Activated CD4-positive, alpha-beta memory T cell treated with anti-CD3 and anti-CD28 coated beads for 36 hours (primary cell): ENCODE measurements at regions of chr12 and their contacts with region 1.

Region 1: DNA sequence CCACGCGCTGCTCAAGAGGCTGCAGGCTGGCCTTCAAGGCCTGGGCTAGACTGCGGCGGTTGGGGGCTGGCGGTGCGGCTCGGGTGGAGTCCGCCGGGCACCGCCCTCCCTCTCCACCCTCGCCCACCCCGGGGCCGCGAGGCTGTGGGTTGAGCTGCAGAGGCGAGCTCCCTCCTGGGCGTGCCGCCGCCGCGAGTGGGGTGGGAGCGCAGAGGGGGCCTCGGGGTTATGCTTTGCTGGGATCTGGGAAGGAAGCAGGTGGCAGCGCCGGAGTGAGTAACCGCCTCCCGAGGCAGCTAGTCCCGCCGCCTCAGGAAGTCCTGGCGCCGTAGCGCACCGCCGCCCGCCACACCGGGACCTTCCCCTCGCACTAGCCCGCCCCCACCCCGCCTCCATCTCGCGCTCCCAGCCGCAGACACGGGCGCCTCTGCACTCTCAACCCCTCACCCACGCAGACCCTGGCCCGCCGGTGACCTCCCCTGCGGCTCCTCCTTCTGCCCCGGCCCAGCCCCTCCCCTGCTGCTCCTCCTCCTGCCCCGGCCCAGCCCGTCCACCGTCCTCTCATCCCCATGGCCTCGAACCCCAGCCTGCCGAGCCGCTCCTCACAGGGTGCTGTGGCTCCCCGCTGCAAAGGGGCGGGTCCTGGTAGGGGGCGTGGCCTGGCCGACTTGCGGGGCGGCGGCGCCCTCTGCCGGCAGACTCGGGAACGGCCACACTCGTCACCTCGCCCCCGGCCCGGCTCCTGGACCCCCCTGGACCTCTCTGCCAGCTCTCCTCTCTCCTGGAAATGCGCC is 16.6 kb downstream of the TAMALIN start:
- DNase-seq: peak; percentile 95
- H3K4me3 Mint-ChIP-seq: peak overlapping the region; percentile 79
- H3K27ac Mint-ChIP-seq: peak overlapping the region; percentile 91
- H3K4me1 Mint-ChIP-seq: peaks cover 32% of the 10 kb centered on the region
- H3K27me3 Mint-ChIP-seq: no peaks in the 10 kb centered on the region

Region 2: GRCh38 chr12:51923501-51924271 is 99.7 kb before region 1 on chr12:
- CTCF ChIA-PET with region 1: interaction called, 12 read pairs
- POLR2A ChIA-PET with region 1: interaction called, 3 read pairs
- intact Hi-C with region 1: loop called (anchors 2 kb)
- DNase-seq: peak; percentile 69
- H3K4me3 Mint-ChIP-seq: no peak overlapping the region
- H3K27ac Mint-ChIP-seq: no peak overlapping the region
- H3K4me1 Mint-ChIP-seq: peaks cover 12% of the 10 kb centered on the region
- H3K27me3 Mint-ChIP-seq: no peaks in the 10 kb centered on the region

Region 3: DNA sequence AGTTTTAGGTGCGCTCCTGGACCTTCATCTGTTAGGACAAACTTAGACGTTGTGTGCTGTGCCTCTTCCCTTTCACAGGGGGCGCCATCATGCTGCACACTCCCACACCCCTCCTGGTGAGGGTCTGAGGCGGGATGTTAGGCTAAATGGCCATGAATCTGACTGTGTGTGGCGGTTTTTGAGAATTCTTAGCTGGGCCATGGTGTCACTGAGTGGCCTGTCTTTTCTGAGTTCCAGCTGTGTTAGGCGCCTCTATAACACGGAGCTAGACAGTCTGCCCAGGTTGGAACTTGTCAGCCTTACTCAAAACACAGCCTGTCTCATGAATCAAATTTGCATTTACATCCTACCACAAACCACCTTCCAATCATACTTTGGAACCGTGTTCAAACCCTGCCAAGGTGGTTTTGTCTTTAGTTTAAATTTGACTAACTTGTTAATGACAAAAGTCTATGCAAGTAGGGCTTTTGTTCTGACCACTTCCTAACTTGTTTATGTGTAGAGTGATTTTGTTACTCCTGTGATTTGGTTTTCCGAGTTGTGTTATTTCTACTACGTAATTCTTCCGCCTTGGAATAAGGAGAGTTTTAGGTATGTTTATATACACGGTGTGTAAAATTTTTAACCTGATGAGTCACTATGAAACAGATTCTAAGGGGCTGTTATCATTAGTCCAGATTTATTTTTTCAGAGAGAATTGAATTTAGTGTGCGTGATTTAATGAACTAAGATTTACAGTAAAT is 52.3 kb before region 1 on chr12:
- CTCF ChIA-PET with region 1: interaction called, 23 read pairs
- POLR2A ChIA-PET with region 1: interaction called, 3 read pairs
- intact Hi-C with region 1: loop called (anchors 1 kb)
- DNase-seq: peak; percentile 75
- H3K4me3 Mint-ChIP-seq: peak overlapping the region; percentile 67
- H3K27ac Mint-ChIP-seq: peak overlapping the region; percentile 66
- H3K4me1 Mint-ChIP-seq: peaks cover 61% of the 10 kb centered on the region
- H3K27me3 Mint-ChIP-seq: peaks cover 6% of the 10 kb centered on the region

Region 4: DNA sequence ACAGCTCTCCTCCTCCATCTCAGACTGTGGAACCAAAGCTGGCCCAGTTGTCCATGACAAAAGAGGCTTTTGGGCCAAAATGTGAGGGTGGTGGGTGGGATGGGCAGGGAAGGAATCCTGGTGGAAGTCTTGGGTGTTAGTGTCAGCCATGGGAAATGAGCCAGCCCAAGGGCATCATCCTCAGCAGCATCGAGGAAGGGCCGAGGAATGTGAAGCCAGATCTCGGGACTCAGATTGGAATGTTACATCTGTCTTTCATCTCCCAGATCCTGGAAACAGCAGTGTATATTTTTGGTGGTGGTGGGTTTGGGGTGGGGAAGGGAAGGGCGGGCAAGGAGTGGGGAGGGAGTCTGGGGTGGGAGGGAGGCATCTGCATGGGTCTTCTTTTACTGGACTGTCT is 28.4 kb before region 1 on chr12:
- CTCF ChIA-PET with region 1: interaction called, 399 read pairs
- POLR2A ChIA-PET with region 1: interaction called, 4 read pairs
- intact Hi-C with region 1: loop called (anchors 1 kb)
- DNase-seq: no peak
- H3K4me3 Mint-ChIP-seq: no peak overlapping the region
- H3K27ac Mint-ChIP-seq: no peak overlapping the region
- H3K4me1 Mint-ChIP-seq: peaks cover 7% of the 10 kb centered on the region
- H3K27me3 Mint-ChIP-seq: no peaks in the 10 kb centered on the region

Region 5: GRCh38 chr12:52010152-52010622 is 13.2 kb before region 1 on chr12:
- CTCF ChIA-PET with region 1: interaction called, 168 read pairs
- POLR2A ChIA-PET with region 1: interaction called, 28 read pairs
- intact Hi-C with region 1: loop called (anchors 1 kb)
- DNase-seq: no peak
- H3K4me3 Mint-ChIP-seq: no peak overlapping the region
- H3K27ac Mint-ChIP-seq: no peak overlapping the region
- H3K4me1 Mint-ChIP-seq: peaks cover 14% of the 10 kb centered on the region
- H3K27me3 Mint-ChIP-seq: peaks cover 2% of the 10 kb centered on the region

Region 6: GRCh38 chr12:52069327-52070184 is 46.2 kb after region 1 on chr12 and contains the start of gene ATG101:
- CTCF ChIA-PET with region 1: interaction called, 407 read pairs
- POLR2A ChIA-PET with region 1: interaction called, 18 read pairs
- intact Hi-C with region 1: loop called (anchors 1 kb)
- DNase-seq: peak; percentile 91
- H3K4me3 Mint-ChIP-seq: peak within 1 kb of the TSS; percentile 91
- H3K27ac Mint-ChIP-seq: peak within 1 kb of the TSS; percentile 98
- H3K4me1 Mint-ChIP-seq: peaks cover 47% of the 10 kb centered on the region
- H3K27me3 Mint-ChIP-seq: no peaks in the 10 kb centered on the region
- total RNA-seq, gene ATG101: 35.7 to 38.0 TPM

Region 7: DNA sequence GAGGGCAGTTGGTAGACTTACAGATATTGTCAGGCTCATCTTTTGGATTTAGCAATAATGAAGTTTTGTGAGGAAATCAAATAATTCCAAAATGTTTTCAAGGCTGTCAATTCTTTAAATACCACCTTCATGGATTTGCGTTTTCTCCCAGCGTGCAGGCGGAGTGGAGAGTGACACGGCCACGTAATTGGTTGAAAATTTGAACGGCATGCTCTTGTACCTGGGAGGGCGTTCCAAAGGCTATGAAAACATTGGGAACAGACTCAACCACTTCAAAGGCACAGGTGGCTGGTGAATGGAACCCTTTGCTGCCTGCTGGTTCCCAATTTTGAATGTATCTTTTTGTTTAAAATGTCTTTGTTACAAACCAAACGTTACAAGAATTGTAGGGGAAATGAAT is 68.5 kb after region 1 on chr12:
- CTCF ChIA-PET with region 1: interaction called, 438 read pairs
- POLR2A ChIA-PET with region 1: no interaction called
- intact Hi-C with region 1: no loop called
- DNase-seq: no peak
- H3K4me3 Mint-ChIP-seq: no peak overlapping the region
- H3K27ac Mint-ChIP-seq: no peak overlapping the region
- H3K4me1 Mint-ChIP-seq: no peaks in the 10 kb centered on the region
- H3K27me3 Mint-ChIP-seq: peaks cover 36% of the 10 kb centered on the region

Region 8: GRCh38 chr12:52171950-52172512 is 148.7 kb after region 1 on chr12:
- CTCF ChIA-PET with region 1: no interaction called
- POLR2A ChIA-PET with region 1: no interaction called
- intact Hi-C with region 1: no loop called
- DNase-seq: peak; percentile 49
- H3K4me3 Mint-ChIP-seq: no peak overlapping the region
- H3K27ac Mint-ChIP-seq: no peak overlapping the region
- H3K4me1 Mint-ChIP-seq: no peaks in the 10 kb centered on the region
- H3K27me3 Mint-ChIP-seq: no peaks in the 10 kb centered on the region

Region 9: DNA sequence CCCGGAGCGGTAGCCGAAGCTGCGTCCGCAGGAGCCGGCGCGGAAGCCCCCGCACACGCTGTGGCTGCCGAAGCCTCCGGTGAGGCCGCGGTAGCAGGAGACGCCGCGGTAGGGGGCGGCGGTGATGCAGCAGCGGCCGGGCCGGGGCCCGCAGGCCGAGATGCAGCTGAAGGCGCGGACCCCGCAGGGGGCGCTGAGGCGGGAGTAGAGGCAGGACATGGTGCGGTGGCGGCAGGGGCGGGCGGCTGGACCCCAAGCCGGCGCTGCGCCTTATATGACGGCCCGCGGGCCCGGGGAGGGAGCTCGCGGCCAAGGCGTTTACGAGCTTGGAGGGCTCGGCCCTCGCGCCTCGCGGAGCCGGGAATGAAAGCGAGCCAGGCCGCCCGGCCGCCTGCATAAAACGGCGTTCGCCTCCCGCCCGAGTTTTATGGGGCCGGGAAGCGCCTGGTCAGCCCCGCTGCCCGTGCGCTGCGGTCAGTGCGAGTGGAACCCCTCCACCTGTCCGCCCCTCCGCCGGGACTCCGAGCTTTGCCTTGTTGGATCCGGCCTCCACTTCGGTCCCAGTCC is 235.0 kb after region 1 on chr12:
- CTCF ChIA-PET with region 1: no interaction called
- POLR2A ChIA-PET with region 1: no interaction called
- intact Hi-C with region 1: no loop called
- DNase-seq: no peak
- H3K4me3 Mint-ChIP-seq: no peak overlapping the region
- H3K27ac Mint-ChIP-seq: no peak overlapping the region
- H3K4me1 Mint-ChIP-seq: no peaks in the 10 kb centered on the region
- H3K27me3 Mint-ChIP-seq: peaks cover 43% of the 10 kb centered on the region